ENCODE measurements at regions of chr14 and their contacts with region 1.

Region 1: GRCh38 chr14:21498553-21499526 is 12.3 kb downstream of the METTL3 start:
- DNase-seq: peak; percentile 24
- H3K4me3 ChIP-seq: no peak overlapping the region
- H3K27ac ChIP-seq: no peak overlapping the region
- H3K4me1 ChIP-seq: peaks cover 3% of the 10 kb centered on the region
- H3K27me3 ChIP-seq: no peaks in the 10 kb centered on the region
- CTCF ChIP-seq: peak; percentile 34 to 65 (median 60)
- POLR2A ChIP-seq: no peak

Region 2: DNA sequence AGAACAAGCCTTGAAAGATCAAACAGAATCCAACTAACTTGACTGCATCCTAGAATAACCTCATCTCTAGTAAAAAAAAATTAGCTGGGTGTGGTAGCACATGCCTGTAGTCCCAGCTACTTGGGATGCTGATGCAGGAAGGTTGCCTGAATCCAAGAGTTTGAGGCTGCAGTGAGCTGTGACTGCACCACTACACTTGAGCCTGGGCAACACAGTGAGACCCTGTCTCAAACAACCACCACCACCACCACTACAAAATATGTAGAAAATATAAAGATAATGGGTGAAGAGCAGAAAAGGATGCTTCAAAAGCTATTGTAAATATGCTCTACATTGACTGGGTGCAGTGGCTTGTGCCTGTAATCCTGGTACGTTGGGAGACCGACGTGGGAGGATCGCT is 142.3 kb before region 1 on chr14:
- intact Hi-C with region 1: no loop called
- DNase-seq: no peak
- H3K4me3 ChIP-seq: no peak overlapping the region
- H3K27ac ChIP-seq: no peak overlapping the region
- H3K4me1 ChIP-seq: no peaks in the 10 kb centered on the region
- H3K27me3 ChIP-seq: no peaks in the 10 kb centered on the region
- CTCF ChIP-seq: no peak
- POLR2A ChIP-seq: no peak

Region 3: DNA sequence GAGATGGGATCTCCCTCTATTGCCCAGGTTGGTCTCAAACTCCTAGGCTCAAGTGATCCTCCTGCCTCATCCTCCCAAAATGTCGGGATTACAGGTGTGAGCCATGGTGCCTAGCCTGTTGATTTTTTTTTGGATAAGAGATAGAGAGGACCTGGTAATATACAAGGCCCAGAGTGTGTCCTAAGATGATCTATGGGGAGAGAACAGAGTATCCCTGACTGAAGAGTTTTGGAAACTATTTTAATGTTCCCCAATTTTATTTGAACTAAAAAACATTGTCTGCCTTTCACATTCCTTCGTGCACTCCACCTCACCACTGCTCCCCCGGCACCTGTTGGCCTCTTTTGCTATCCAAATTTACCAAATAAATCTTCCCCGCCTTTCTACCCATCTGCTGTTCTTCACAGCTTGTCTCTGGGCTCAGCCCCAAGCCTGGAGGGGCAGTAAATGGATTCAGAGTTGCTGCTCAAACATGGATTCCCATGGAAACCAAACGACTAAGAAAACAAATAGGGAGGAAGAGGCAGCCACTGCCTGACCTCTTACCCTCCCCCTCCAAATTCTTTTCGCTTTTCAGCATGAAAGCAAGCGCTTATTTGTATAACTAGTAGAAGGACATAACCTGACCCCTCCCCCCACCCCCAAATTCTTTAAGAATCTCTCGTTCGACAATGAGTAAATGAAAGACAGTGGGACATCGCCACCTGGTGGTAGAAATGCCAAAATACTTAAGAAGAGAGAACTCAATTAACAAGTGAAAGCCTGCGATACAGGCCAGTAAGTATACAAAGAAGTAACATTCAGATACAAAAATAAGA is 58.5 kb after region 1 on chr14:
- intact Hi-C with region 1: loop called (anchors 5 kb)
- DNase-seq: peak; percentile 89
- H3K4me3 ChIP-seq: peak overlapping the region; percentile 14 to 23
- H3K27ac ChIP-seq: peak overlapping the region; percentile 66 to 69
- H3K4me1 ChIP-seq: no peaks in the 10 kb centered on the region
- H3K27me3 ChIP-seq: no peaks in the 10 kb centered on the region
- CTCF ChIP-seq: peak; percentile 72 to 90 (median 78)
- POLR2A ChIP-seq: no peak

Measured in prostate gland (tissue), 2 donors.